Endothelial cell of umbilical vein (primary cell): ENCODE measurements at regions of chr14 and their contacts with region 1.

Region 1: GRCh38 chr14:34322940-34323418 is 139.1 kb downstream of the SPTSSA start:
- DNase-seq: peak; percentile 57
- H3K4me3 ChIP-seq: no peak overlapping the region
- H3K27ac ChIP-seq: no peak overlapping the region
- H3K4me1 ChIP-seq: no peaks in the 10 kb centered on the region
- H3K27me3 ChIP-seq: peaks cover 5 to 11% of the 10 kb centered on the region in 2 experiments
- CTCF ChIP-seq: peak; percentile 69 to 72
- POLR2A ChIP-seq: no peak

Region 2: GRCh38 chr14:32710731-32711680 is 1612.0 kb before region 1 on chr14:
- CTCF ChIA-PET with region 1: no interaction called
- POLR2A ChIA-PET with region 1: no interaction called
- dilution Hi-C with region 1: no loop called
- intact Hi-C with region 1: loop called (anchors 5 kb)
- DNase-seq: peak; percentile 51
- H3K4me3 ChIP-seq: no peak overlapping the region
- H3K27ac ChIP-seq: no peak overlapping the region
- H3K4me1 ChIP-seq: no peaks in the 10 kb centered on the region
- H3K27me3 ChIP-seq: peaks cover 1 to 3% of the 10 kb centered on the region in 2 experiments
- CTCF ChIP-seq: peak; percentile 25 to 47
- POLR2A ChIP-seq: no peak

Region 3: GRCh38 chr14:33848706-33849454 is 474.1 kb before region 1 on chr14:
- CTCF ChIA-PET with region 1: interaction called, 11 read pairs
- POLR2A ChIA-PET with region 1: no interaction called
- dilution Hi-C with region 1: no loop called
- intact Hi-C with region 1: no loop called
- DNase-seq: peak; percentile 48
- H3K4me3 ChIP-seq: no peak overlapping the region
- H3K27ac ChIP-seq: no peak overlapping the region
- H3K4me1 ChIP-seq: no peaks in the 10 kb centered on the region
- H3K27me3 ChIP-seq: no peaks in the 10 kb centered on the region
- CTCF ChIP-seq: peak; percentile 63 to 82
- POLR2A ChIP-seq: no peak

Region 4: DNA sequence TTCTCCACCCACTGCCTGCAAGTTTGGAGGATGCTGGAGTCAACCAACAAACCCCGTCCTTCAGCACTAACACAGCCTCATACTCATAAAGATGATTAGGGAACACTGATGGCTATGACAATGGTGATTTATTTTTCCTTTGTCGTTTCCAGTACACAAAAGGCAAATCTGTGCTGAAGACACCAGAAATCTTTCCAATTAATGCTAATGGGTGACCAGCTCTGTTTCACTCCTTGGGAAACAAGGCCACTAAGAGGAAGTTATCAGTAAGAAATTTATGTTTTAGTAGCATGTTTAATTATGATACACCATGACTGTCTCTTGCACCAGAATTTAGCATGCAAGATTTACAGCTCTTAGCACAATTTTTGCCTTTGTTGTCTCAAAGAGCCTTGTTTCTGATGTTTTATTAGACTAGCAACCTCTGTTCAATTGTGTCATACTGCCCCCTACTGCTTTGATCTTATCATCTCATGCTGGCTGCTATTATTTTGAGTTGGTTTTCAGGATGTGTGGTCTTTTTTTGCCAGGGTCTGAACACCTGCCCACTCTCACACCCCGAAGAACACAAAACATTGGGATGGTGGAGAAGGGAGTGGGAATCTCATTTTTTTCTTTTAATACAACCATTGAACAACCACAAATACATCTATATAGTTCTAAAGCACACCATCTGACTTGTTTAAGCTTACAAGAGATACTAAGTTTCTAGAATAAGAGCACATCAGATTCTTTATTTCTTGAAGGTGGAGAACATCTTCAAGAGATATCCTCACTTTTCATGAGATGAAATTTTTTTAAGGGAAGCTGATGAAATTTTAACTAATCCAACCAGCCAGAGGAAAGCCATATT is 21.9 kb before region 1 on chr14:
- CTCF ChIA-PET with region 1: interaction called, 30 read pairs
- POLR2A ChIA-PET with region 1: no interaction called
- dilution Hi-C with region 1: no loop called
- intact Hi-C with region 1: no loop called
- DNase-seq: peak; percentile 49
- H3K4me3 ChIP-seq: no peak overlapping the region
- H3K27ac ChIP-seq: no peak overlapping the region
- H3K4me1 ChIP-seq: no peaks in the 10 kb centered on the region
- H3K27me3 ChIP-seq: peaks cover 0 to 2% of the 10 kb centered on the region in 2 experiments
- CTCF ChIP-seq: peak; percentile 43 to 45
- POLR2A ChIP-seq: no peak

Region 5: DNA sequence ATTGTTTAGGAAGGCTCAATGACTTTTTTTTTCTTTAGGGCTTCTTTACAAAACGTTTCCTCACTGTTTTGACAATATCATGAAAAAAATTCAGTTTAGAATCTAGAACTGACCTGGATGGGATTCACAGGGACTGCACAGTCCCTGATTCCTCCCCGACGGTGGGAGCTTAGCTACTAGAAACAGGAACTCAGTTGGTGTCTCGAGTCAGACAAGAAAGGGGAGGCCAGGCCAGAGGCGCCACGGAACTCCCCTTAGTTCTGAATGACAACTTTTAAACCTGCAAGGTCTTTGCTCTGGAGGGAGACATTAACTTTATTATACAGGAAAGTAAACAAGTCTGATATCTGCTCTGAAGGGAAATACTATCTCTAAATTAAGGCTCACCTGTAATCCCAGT is 614.5 kb after region 1 on chr14:
- CTCF ChIA-PET with region 1: no interaction called
- POLR2A ChIA-PET with region 1: no interaction called
- dilution Hi-C with region 1: no loop called
- intact Hi-C with region 1: no loop called
- DNase-seq: no peak
- H3K4me3 ChIP-seq: no peak overlapping the region
- H3K27ac ChIP-seq: no peak overlapping the region
- H3K4me1 ChIP-seq: no peaks in the 10 kb centered on the region
- H3K27me3 ChIP-seq: no peaks in the 10 kb centered on the region
- CTCF ChIP-seq: no peak
- POLR2A ChIP-seq: no peak

Region 6: DNA sequence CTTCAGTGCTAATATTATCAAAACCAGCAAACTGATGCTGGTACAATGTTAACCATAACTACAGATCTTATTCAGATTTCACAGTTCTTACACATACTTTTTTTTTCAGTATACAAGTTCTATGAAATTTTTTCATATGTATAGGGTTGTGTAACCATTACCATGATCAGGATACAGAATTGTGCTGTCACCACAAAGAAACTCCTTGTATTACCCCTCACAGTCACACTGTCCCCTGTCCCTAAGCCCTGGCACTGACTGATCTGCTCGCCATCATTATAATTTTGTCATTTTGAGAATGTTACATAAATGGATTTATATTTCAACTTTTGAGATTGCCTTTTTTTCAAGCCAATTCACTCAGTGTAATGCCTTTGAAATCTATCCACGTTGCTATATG is 1102.9 kb after region 1 on chr14:
- CTCF ChIA-PET with region 1: no interaction called
- POLR2A ChIA-PET with region 1: no interaction called
- dilution Hi-C with region 1: no loop called
- intact Hi-C with region 1: loop called (anchors 2 kb)
- DNase-seq: no peak
- H3K4me3 ChIP-seq: no peak overlapping the region
- H3K27ac ChIP-seq: no peak overlapping the region
- H3K4me1 ChIP-seq: peaks cover 8% of the 10 kb centered on the region
- H3K27me3 ChIP-seq: no peaks in the 10 kb centered on the region
- CTCF ChIP-seq: no peak
- POLR2A ChIP-seq: no peak